ENCODE measurements at regions of chr13 and their contacts with region 1.

Region 1: GRCh38 chr13:52809310-52809769 is 39.1 kb downstream of the PCDH8 start:
- DNase-seq: peak; percentile 72
- ATAC-seq: peak; percentile 99
- H3K4me3 ChIP-seq: no peak overlapping the region
- H3K27ac ChIP-seq: no peak overlapping the region
- H3K4me1 ChIP-seq: peaks cover 0 to 4% of the 10 kb centered on the region in 2 experiments; a peak in 2 of 4 replicates
- H3K27me3 ChIP-seq: peaks cover 9% of the 10 kb centered on the region; the same call in 1 of the 2 replicates
- CTCF ChIP-seq: peak; percentile 57 to 84 (median 80); a peak in 5 of 6 replicates
- POLR2A ChIP-seq: no peak
- RAD21 ChIP-seq: peak; percentile 74

Region 2: DNA sequence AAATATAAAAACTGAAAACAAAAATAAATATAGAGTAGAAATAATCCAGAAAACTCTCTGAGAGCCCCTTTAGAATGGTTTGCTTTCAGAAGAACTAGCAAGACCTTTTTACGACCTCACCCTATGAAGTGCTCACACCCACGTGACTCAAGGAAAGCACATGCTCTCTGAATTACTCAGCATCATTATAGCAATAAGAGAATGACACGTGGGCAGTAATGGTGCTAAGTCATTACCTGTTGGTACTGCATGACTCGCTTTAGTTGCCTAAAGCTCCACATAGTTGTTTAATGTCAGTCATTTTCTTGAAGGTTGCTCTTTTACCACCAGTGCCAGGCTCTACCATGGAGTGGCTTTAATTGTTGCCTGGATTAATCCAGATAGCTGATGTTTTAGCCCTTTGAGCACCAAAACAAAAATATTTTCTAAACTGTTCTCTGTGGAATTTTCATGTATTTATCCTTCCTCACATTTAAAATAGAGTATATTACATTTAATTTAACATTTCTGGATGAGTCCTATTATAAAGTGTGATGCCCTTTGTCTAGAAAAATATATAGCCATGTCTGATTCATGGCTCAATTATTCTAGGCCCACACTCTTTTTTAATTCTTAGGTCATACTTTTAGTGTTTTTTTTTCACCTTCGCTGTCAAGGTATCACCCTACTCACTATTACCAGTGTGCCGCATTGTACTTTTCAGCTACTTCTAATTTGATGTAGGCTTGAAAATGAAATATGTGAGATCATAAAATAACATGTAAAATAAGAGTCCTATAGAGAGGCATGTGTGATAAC is 460.2 kb before region 1 on chr13:
- CTCF ChIA-PET with region 1: no interaction called
- POLR2A ChIA-PET with region 1: no interaction called
- RAD21 ChIA-PET with region 1: no interaction called
- intact Hi-C with region 1: loop called (anchors 10 kb)
- DNase-seq: peak; percentile 73
- ATAC-seq: peak; percentile 77
- H3K4me3 ChIP-seq: no peak overlapping the region
- H3K27ac ChIP-seq: peak overlapping the region; percentile 39; the same call in 1 of the 2 replicates
- H3K4me1 ChIP-seq: peaks cover 22 to 25% of the 10 kb centered on the region in 2 experiments
- H3K27me3 ChIP-seq: no peaks in the 10 kb centered on the region
- CTCF ChIP-seq: no peak
- POLR2A ChIP-seq: no peak
- RAD21 ChIP-seq: no peak

Region 3: DNA sequence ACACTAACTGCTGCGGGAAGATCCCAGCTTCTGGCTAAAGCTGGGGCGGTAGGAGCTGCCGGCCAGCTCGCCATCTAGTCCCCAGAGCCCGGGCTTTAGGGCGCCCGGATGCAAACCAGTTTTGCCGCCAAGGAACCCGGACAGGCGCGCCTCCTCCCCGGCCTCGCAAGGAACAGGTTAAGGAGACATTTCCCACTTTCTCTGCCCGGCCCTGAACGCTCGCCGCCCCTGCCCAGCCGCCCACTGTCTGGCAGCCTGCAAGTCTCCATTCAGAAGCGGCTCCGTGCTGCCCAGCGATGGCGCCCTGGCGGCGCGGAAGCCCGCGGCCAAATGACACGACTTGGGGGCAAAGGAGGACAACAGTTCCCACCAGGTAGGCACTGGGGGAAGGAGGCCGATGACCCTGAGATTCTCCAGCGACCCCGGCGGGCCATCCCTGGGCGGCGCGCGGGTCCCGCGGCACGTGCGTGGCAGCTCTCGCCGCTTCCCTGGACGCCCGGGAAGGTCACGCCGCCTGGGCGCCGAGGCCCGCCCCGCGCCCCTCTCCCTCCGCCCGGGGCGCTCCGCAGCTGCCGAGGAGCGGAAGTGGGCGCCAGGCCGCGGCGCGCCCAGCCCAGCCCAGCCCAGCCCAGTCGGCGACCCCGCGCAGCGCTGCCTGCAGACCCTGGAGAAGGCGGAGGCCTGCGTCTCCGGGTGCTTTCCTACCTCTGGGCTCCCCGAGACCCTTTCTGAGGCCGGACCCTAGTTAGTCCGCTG is 209.3 kb before region 1 on chr13:
- CTCF ChIA-PET with region 1: no interaction called
- POLR2A ChIA-PET with region 1: no interaction called
- RAD21 ChIA-PET with region 1: no interaction called
- intact Hi-C with region 1: no loop called
- DNase-seq: no peak
- ATAC-seq: no peak
- H3K4me3 ChIP-seq: no peak overlapping the region
- H3K27ac ChIP-seq: no peak overlapping the region
- H3K4me1 ChIP-seq: no peaks in the 10 kb centered on the region
- H3K27me3 ChIP-seq: no peaks in the 10 kb centered on the region
- CTCF ChIP-seq: no peak
- POLR2A ChIP-seq: no peak
- RAD21 ChIP-seq: no peak

Region 4: GRCh38 chr13:52652196-52652979 is 157.0 kb before region 1 on chr13 and contains the start of gene SUGT1:
- CTCF ChIA-PET with region 1: interaction called, 10 read pairs
- POLR2A ChIA-PET with region 1: interaction called, 4 read pairs
- RAD21 ChIA-PET with region 1: no interaction called
- intact Hi-C with region 1: loop called (anchors 5 kb)
- DNase-seq: peak; percentile 96
- ATAC-seq: peak; percentile 97
- H3K4me3 ChIP-seq: peak within 1 kb of the TSS; percentile 93 to 99
- H3K27ac ChIP-seq: peak within 1 kb of the TSS; percentile 92
- H3K4me1 ChIP-seq: peaks cover 4 to 14% of the 10 kb centered on the region in 2 experiments; a peak in 3 of 4 replicates
- H3K27me3 ChIP-seq: no peaks in the 10 kb centered on the region
- CTCF ChIP-seq: peak in 2 of 3 experiments; percentile 65 to 70; a peak in 4 of 6 replicates
- POLR2A ChIP-seq: no peak
- RAD21 ChIP-seq: no peak
- total RNA-seq, gene SUGT1: 75.6 TPM

Region 5: GRCh38 chr13:52665325-52665724 is 144.0 kb before region 1 on chr13:
- CTCF ChIA-PET with region 1: interaction called, 39 read pairs
- POLR2A ChIA-PET with region 1: no interaction called
- RAD21 ChIA-PET with region 1: interaction called in 1 of 2 experiments, 3 read pairs
- intact Hi-C with region 1: loop called (anchors 1 kb)
- DNase-seq: peak; percentile 16
- ATAC-seq: no peak
- H3K4me3 ChIP-seq: no peak overlapping the region
- H3K27ac ChIP-seq: no peak overlapping the region
- H3K4me1 ChIP-seq: no peaks in the 10 kb centered on the region
- H3K27me3 ChIP-seq: no peaks in the 10 kb centered on the region
- CTCF ChIP-seq: peak; percentile 20 to 61 (median 54); a peak in 4 of 6 replicates
- POLR2A ChIP-seq: no peak
- RAD21 ChIP-seq: no peak

Region 6: GRCh38 chr13:52707375-52707774 is 102.0 kb before region 1 on chr13:
- CTCF ChIA-PET with region 1: no interaction called
- POLR2A ChIA-PET with region 1: no interaction called
- RAD21 ChIA-PET with region 1: interaction called in 1 of 2 experiments, 3 read pairs
- intact Hi-C with region 1: loop called (anchors 2 kb)
- DNase-seq: no peak
- ATAC-seq: peak; percentile 79
- H3K4me3 ChIP-seq: no peak overlapping the region
- H3K27ac ChIP-seq: no peak overlapping the region
- H3K4me1 ChIP-seq: no peaks in the 10 kb centered on the region
- H3K27me3 ChIP-seq: no peaks in the 10 kb centered on the region
- CTCF ChIP-seq: peak in 2 of 3 experiments; percentile 24 to 29; a peak in 2 of 6 replicates
- POLR2A ChIP-seq: no peak
- RAD21 ChIP-seq: no peak

Region 7: DNA sequence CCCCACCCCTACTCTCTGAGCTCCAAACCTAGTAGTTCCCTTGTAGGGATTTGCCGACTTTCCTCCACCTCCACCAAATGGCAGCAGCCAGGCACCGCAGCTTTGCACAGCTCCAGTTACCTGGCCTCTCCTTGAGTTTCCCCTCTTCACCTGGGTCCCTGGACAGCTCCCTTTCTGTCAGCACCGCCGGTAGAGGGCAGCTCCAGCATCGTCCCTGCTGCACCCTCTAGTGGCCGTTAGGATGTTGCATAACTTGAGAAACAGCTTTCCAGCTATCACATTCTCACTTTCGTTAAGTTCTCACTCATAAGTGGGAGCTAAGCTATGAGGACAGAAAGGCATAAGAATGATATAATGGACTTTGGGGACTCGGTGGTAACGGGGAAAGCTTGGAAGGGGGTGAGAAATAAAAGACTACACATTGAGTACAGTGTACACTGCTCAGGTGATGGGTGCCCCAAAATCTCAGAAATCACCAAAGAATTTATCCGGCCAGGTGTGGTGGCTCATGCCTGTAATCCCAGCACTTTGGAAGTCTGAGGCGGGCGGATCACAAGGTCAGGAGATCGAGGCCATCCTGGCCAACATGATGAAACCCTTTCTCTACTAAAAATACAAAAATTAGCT is 158.8 kb after region 1 on chr13:
- CTCF ChIA-PET with region 1: interaction called, 11 read pairs
- POLR2A ChIA-PET with region 1: no interaction called
- RAD21 ChIA-PET with region 1: no interaction called
- intact Hi-C with region 1: no loop called
- DNase-seq: peak; percentile 54
- ATAC-seq: peak; percentile 100
- H3K4me3 ChIP-seq: no peak overlapping the region
- H3K27ac ChIP-seq: no peak overlapping the region
- H3K4me1 ChIP-seq: no peaks in the 10 kb centered on the region
- H3K27me3 ChIP-seq: peaks cover 14% of the 10 kb centered on the region
- CTCF ChIP-seq: peak; percentile 85 to 91 (median 90)
- POLR2A ChIP-seq: no peak
- RAD21 ChIP-seq: peak; percentile 76